ENCODE measurements at regions of chr1 and their contacts with region 1.

Region 1: GRCh38 chr1:26874896-26875295 is 11.9 kb downstream of the SFN start:
- DNase-seq: no peak
- H3K4me3 Mint-ChIP-seq: no peak overlapping the region
- H3K27ac Mint-ChIP-seq: no peak overlapping the region
- H3K4me1 Mint-ChIP-seq: no peaks in the 10 kb centered on the region
- H3K27me3 Mint-ChIP-seq: no peaks in the 10 kb centered on the region

Region 2: GRCh38 chr1:26378088-26378878 is 496.6 kb before region 1 on chr1:
- intact Hi-C with region 1: no loop called
- DNase-seq: peak; percentile 82
- H3K4me3 Mint-ChIP-seq: peak overlapping the region; percentile 44
- H3K27ac Mint-ChIP-seq: peak overlapping the region; percentile 75
- H3K4me1 Mint-ChIP-seq: peaks cover 58% of the 10 kb centered on the region
- H3K27me3 Mint-ChIP-seq: no peaks in the 10 kb centered on the region

Region 3: GRCh38 chr1:26602378-26602959 is 272.4 kb before region 1 on chr1:
- intact Hi-C with region 1: loop called (anchors 5 kb)
- DNase-seq: no peak
- H3K4me3 Mint-ChIP-seq: no peak overlapping the region
- H3K27ac Mint-ChIP-seq: no peak overlapping the region
- H3K4me1 Mint-ChIP-seq: peaks cover 14% of the 10 kb centered on the region
- H3K27me3 Mint-ChIP-seq: peaks cover 4% of the 10 kb centered on the region

Region 4: GRCh38 chr1:26811057-26811456 is 63.8 kb before region 1 on chr1:
- intact Hi-C with region 1: loop called (anchors 5 kb)
- DNase-seq: no peak
- H3K4me3 Mint-ChIP-seq: no peak overlapping the region
- H3K27ac Mint-ChIP-seq: no peak overlapping the region
- H3K4me1 Mint-ChIP-seq: peaks cover 17% of the 10 kb centered on the region
- H3K27me3 Mint-ChIP-seq: no peaks in the 10 kb centered on the region

Region 5: DNA sequence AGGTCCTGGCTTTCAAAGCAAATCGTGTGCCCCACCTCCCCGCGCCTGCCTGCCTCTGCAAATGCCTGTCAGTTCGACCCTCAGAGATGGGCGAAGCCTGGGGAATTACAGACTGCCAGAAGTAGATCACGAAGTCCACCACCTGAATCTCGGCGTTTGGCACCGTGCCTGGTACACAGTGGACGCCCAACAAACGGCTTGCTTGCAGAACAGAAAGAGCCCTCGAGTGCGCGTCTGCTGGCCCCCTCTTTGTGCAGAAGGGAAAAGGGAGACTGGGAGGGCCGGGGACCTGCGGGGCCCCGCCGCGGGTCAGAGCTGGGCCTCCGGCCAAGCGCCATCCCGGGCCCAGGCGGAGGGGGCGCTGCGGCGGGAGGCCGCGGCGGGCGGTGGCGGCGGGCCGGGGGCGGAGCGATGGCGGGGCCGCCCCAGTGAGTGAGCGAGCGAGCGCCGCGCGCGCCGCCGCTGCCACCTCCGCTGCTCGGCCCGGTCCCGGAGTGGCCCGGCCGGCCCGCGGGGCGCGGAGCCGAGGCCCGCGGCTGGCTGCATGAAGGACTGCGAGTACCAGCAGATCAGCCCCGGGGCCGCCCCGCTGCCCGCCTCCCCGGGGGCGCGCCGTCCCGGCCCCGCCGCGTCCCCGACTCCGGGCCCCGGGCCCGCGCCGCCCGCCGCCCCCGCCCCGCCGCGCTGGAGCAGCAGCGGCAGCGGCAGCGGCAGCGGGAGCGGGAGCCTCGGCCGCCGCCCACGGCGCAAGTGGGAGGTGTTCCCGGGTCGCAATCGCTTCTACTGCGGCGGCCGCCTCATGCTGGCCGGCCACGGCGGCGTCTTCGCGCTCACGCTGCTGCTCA is 48.4 kb before region 1 on chr1 and contains the start of gene ZDHHC18:
- intact Hi-C with region 1: loop called (anchors 5 kb)
- DNase-seq: peak; percentile 67
- H3K4me3 Mint-ChIP-seq: peak within 1 kb of the TSS; percentile 92
- H3K27ac Mint-ChIP-seq: peak within 1 kb of the TSS; percentile 93
- H3K4me1 Mint-ChIP-seq: peaks cover 37% of the 10 kb centered on the region
- H3K27me3 Mint-ChIP-seq: no peaks in the 10 kb centered on the region
- total RNA-seq, gene ZDHHC18: 62.7 and 64.3 TPM in 2 replicates

Region 6: GRCh38 chr1:26853156-26853555 is 21.7 kb before region 1 on chr1:
- intact Hi-C with region 1: loop called (anchors 1 kb)
- DNase-seq: peak; percentile 53
- H3K4me3 Mint-ChIP-seq: no peak overlapping the region
- H3K27ac Mint-ChIP-seq: no peak overlapping the region
- H3K4me1 Mint-ChIP-seq: no peaks in the 10 kb centered on the region
- H3K27me3 Mint-ChIP-seq: no peaks in the 10 kb centered on the region

Region 7: GRCh38 chr1:26864610-26865527 is 10.0 kb before region 1 on chr1:
- intact Hi-C with region 1: loop called (anchors 1 kb)
- DNase-seq: peak; percentile 95
- H3K4me3 Mint-ChIP-seq: peak overlapping the region; percentile 93
- H3K27ac Mint-ChIP-seq: peak overlapping the region; percentile 90
- H3K4me1 Mint-ChIP-seq: peaks cover 20% of the 10 kb centered on the region
- H3K27me3 Mint-ChIP-seq: no peaks in the 10 kb centered on the region

Region 8: GRCh38 chr1:27253596-27253995 is 378.7 kb after region 1 on chr1:
- intact Hi-C with region 1: no loop called
- DNase-seq: no peak
- H3K4me3 Mint-ChIP-seq: no peak overlapping the region
- H3K27ac Mint-ChIP-seq: peak overlapping the region; percentile 75
- H3K4me1 Mint-ChIP-seq: peaks cover 14% of the 10 kb centered on the region
- H3K27me3 Mint-ChIP-seq: peaks cover 1% of the 10 kb centered on the region

Measured in activated T-helper 2 cell treated with anti-CD3 and anti-CD28 coated beads, Interferon-gamma antibody, Interleukin-2, Interleukin-4, amounts not matched to agents 10 μg/mL and 5 μg/mL and 100 μg/mL, durations not matched to agents 14 hours and 24 hours and 36 hours (primary cell).